ENCODE measurements at regions of chr11 and their contacts with region 1.

Region 1: DNA sequence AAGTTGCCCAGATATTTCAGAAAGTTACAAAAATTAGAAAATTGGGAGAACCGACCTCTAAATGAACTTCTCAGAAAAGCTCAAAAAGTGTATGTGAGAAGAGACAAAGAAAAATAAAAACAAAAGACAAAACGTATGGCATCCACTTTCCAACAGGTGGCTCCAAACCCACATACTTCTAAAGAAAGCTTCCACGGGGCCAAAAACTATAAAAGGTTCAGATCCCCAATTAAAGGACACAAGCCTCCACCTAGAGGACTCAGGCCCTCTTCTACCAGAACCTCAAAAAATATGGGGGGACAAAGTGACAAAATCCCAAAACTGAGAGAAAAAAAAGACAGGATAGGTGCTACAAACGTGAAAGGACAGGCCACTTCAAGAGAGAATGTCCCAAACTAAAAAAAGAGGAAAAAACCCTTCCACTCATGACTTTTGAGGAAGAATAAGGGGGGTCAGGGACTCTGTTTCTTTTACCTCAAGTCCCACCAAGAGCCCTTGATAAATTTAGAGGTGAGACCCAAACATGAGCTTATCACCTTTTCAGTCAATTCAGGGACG is 8.8 kb downstream of the SCGB2A1 start:
- DNase-seq: peak; percentile 19
- ATAC-seq: no peak
- H3K4me3 ChIP-seq: no peak overlapping the region
- H3K27ac ChIP-seq: no peak overlapping the region
- H3K4me1 ChIP-seq: no peaks in the 10 kb centered on the region
- H3K27me3 ChIP-seq: peaks cover 0 to 18% of the 10 kb centered on the region in 2 experiments; a peak in 1 of 5 replicates
- CTCF ChIP-seq: peak; percentile 66
- EP300 ChIP-seq: no peak
- POLR2A ChIP-seq: no peak
- RAD21 ChIP-seq: peak; percentile 65

Region 2: DNA sequence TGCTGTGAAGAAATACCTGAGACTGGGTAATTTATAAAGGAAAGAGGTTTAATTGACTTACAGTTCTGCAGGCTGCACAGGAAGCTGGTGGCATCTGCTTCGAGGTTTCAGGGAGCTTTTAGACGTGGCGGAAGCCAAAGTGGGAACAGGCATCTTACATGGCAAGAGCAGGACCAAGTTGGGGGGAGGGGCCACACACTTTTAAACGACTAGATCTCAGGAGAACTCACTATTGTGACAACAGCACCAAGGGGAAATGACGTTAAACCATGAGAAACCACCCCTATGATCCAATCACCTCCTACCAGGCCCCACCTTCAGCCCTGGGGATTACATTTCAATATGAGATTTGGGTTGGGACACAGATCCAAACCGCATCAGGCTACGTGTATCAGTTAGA is 92.7 kb after region 1 on chr11:
- CTCF ChIA-PET with region 1: interaction called, 34 read pairs
- POLR2A ChIA-PET with region 1: no interaction called
- in situ Hi-C with region 1: loop called (anchors 5 kb)
- intact Hi-C with region 1: loop called (anchors 1 kb)
- DNase-seq: no peak
- ATAC-seq: no peak
- H3K4me3 ChIP-seq: no peak overlapping the region
- H3K27ac ChIP-seq: no peak overlapping the region
- H3K4me1 ChIP-seq: no peaks in the 10 kb centered on the region
- H3K27me3 ChIP-seq: peaks cover 2 to 13% of the 10 kb centered on the region in 2 experiments; a peak in 3 of 5 replicates
- CTCF ChIP-seq: no peak
- EP300 ChIP-seq: no peak
- POLR2A ChIP-seq: no peak
- RAD21 ChIP-seq: no peak

Region 3: GRCh38 chr11:62315431-62315830 is 98.2 kb after region 1 on chr11:
- CTCF ChIA-PET with region 1: interaction called, 34 read pairs
- POLR2A ChIA-PET with region 1: no interaction called
- in situ Hi-C with region 1: loop called (anchors 5 kb)
- intact Hi-C with region 1: loop called (anchors 1 kb)
- DNase-seq: no peak
- ATAC-seq: no peak
- H3K4me3 ChIP-seq: no peak overlapping the region
- H3K27ac ChIP-seq: no peak overlapping the region
- H3K4me1 ChIP-seq: no peaks in the 10 kb centered on the region
- H3K27me3 ChIP-seq: peaks cover 2 to 26% of the 10 kb centered on the region in 2 experiments; a peak in 4 of 5 replicates
- CTCF ChIP-seq: no peak
- EP300 ChIP-seq: no peak
- POLR2A ChIP-seq: no peak
- RAD21 ChIP-seq: no peak

Region 4: DNA sequence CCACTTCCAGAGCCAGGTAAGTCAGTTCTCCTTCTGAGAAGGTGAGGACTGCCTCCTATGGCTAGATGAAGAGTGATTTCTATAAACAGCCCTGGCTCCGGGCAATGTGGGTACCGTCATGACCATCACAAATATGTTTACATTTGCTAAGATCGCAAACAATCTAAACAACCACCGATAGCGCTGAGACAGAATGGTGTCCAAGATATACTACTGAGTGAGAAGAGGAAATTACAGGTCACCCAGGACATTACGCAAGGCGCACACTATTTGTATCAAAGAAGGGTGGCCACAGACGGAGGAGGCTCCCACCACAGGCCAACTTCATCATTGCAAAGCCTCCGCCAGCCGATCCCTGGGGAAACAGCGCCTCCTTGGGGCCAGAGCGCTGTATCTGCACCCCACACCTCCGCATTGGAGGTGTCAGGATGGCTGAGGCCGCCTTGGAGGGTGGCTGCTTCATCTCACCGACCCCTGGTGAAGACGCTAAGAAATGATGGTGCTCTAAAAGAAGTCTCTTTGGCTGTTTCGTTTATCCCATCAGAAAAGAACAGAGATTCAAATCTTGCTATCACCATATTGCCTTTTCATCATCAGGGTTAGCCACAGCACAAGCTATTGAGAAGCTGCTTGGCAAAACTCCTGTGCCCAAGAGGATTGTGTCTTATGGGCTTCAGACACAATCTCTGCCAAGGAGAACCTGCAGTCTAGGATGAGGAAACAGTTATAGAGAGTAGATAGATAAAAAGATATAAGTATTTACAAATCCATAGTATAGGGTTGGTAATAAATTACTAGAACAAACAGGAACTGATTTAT is 107.7 kb after region 1 on chr11:
- CTCF ChIA-PET with region 1: interaction called, 19 read pairs
- POLR2A ChIA-PET with region 1: no interaction called
- in situ Hi-C with region 1: no loop called
- intact Hi-C with region 1: loop called (anchors 1 kb)
- DNase-seq: peak; percentile 70
- ATAC-seq: peak; percentile 99
- H3K4me3 ChIP-seq: no peak overlapping the region
- H3K27ac ChIP-seq: no peak overlapping the region
- H3K4me1 ChIP-seq: peaks cover 32% of the 10 kb centered on the region
- H3K27me3 ChIP-seq: peaks cover 0 to 22% of the 10 kb centered on the region in 2 experiments; a peak in 1 of 5 replicates
- CTCF ChIP-seq: peak; percentile 95
- EP300 ChIP-seq: no peak
- POLR2A ChIP-seq: no peak
- RAD21 ChIP-seq: peak; percentile 97

Measured in HepG2 (cell line).